Naive thymus-derived CD4-positive, alpha-beta T cell (primary cell): ENCODE measurements at regions of chr9 and their contacts with region 1.

Region 1: GRCh38 chr9:97411789-97412625 is at the start of gene TDRD7:
- DNase-seq: peak; percentile 82 to 96 (median 90)
- ATAC-seq: peak; percentile 96
- H3K4me3 ChIP-seq: peak within 1 kb of the TSS; percentile 49
- H3K4me3 Mint-ChIP-seq: peak within 1 kb of the TSS; percentile 73 to 95 (median 86)
- H3K27ac ChIP-seq: peak within 1 kb of the TSS; percentile 85
- H3K27ac Mint-ChIP-seq: peak within 1 kb of the TSS; percentile 61 to 93 (median 86)
- H3K4me1 ChIP-seq: peaks cover 8 to 13% of the 10 kb centered on the region in 2 donors
- H3K4me1 Mint-ChIP-seq: peaks cover 12 to 39% (median 34%) of the 10 kb centered on the region in 7 donors
- H3K27me3 ChIP-seq: no peaks in the 10 kb centered on the region
- H3K27me3 Mint-ChIP-seq: peaks cover 16 to 34% (median 16%) of the 10 kb centered on the region in 5 donors
- total RNA-seq, gene TDRD7: 7.8 to 15.0 (median 10.8) TPM

Region 2: GRCh38 chr9:96777426-96777864 is 634.6 kb before region 1 on chr9:
- CTCF ChIA-PET with region 1: no interaction called
- POLR2A ChIA-PET with region 1: no interaction called
- intact Hi-C with region 1: loop called (anchors 5 kb)
- DNase-seq: peak in 5 of 9 donors; percentile 18 to 47 (median 29)
- ATAC-seq: peak; percentile 28
- H3K4me3 ChIP-seq: peak overlapping the region; percentile 84
- H3K4me3 Mint-ChIP-seq: peak overlapping the region; percentile 91 to 100 (median 98)
- H3K27ac ChIP-seq: peak overlapping the region; percentile 92
- H3K27ac Mint-ChIP-seq: peak overlapping the region; percentile 94 to 100 (median 98)
- H3K4me1 ChIP-seq: peaks cover 6 to 12% of the 10 kb centered on the region in 2 donors
- H3K4me1 Mint-ChIP-seq: peaks cover 12 to 64% (median 58%) of the 10 kb centered on the region in 7 donors
- H3K27me3 ChIP-seq: no peaks in the 10 kb centered on the region
- H3K27me3 Mint-ChIP-seq: no peaks in the 10 kb centered on the region

Region 3: GRCh38 chr9:97398999-97399758 is 12.8 kb before region 1 on chr9:
- CTCF ChIA-PET with region 1: interaction called, 3 read pairs
- POLR2A ChIA-PET with region 1: no interaction called
- intact Hi-C with region 1: loop called in 1 of 2 experiments (anchors 1 kb)
- DNase-seq: peak; percentile 35 to 75 (median 51)
- ATAC-seq: peak; percentile 88
- H3K4me3 ChIP-seq: no peak overlapping the region
- H3K4me3 Mint-ChIP-seq: peak overlapping the region in 1 of 10 donors; percentile 49
- H3K27ac ChIP-seq: no peak overlapping the region
- H3K27ac Mint-ChIP-seq: peak overlapping the region in 1 of 9 donors; percentile 72
- H3K4me1 ChIP-seq: no peaks in the 10 kb centered on the region
- H3K4me1 Mint-ChIP-seq: peaks cover 0 to 27% (median 0%) of the 10 kb centered on the region in 7 donors
- H3K27me3 ChIP-seq: no peaks in the 10 kb centered on the region
- H3K27me3 Mint-ChIP-seq: peaks cover 5 to 44% (median 6%) of the 10 kb centered on the region in 5 donors

Region 4: GRCh38 chr9:97575673-97576200 is 163.7 kb after region 1 on chr9:
- CTCF ChIA-PET with region 1: no interaction called
- POLR2A ChIA-PET with region 1: interaction called, 4 read pairs
- intact Hi-C with region 1: loop called in 1 of 2 experiments (anchors 1 kb)
- DNase-seq: peak in 3 of 9 donors; percentile 4 to 13 (median 5)
- ATAC-seq: no peak
- H3K4me3 ChIP-seq: peak overlapping the region; percentile 69
- H3K4me3 Mint-ChIP-seq: peak overlapping the region; percentile 85 to 99 (median 92)
- H3K27ac ChIP-seq: no peak overlapping the region
- H3K27ac Mint-ChIP-seq: peak overlapping the region in 7 of 9 donors; percentile 32 to 94 (median 88)
- H3K4me1 ChIP-seq: peaks cover 0 to 6% of the 10 kb centered on the region in 2 donors
- H3K4me1 Mint-ChIP-seq: peaks cover 2 to 23% (median 15%) of the 10 kb centered on the region in 7 donors
- H3K27me3 ChIP-seq: no peaks in the 10 kb centered on the region
- H3K27me3 Mint-ChIP-seq: peaks cover 0 to 3% (median 0%) of the 10 kb centered on the region in 5 donors

Region 5: GRCh38 chr9:97615439-97616072 is 203.5 kb after region 1 on chr9:
- CTCF ChIA-PET with region 1: interaction called, 11 read pairs
- POLR2A ChIA-PET with region 1: no interaction called
- intact Hi-C with region 1: loop called (anchors 1 kb)
- DNase-seq: peak in 8 of 9 donors; percentile 29 to 61 (median 52)
- ATAC-seq: peak; percentile 76
- H3K4me3 ChIP-seq: no peak overlapping the region
- H3K4me3 Mint-ChIP-seq: no peak overlapping the region
- H3K27ac ChIP-seq: no peak overlapping the region
- H3K27ac Mint-ChIP-seq: peak overlapping the region in 1 of 9 donors; percentile 37
- H3K4me1 ChIP-seq: no peaks in the 10 kb centered on the region
- H3K4me1 Mint-ChIP-seq: peaks cover 0 to 15% (median 0%) of the 10 kb centered on the region in 7 donors
- H3K27me3 ChIP-seq: no peaks in the 10 kb centered on the region
- H3K27me3 Mint-ChIP-seq: no peaks in the 10 kb centered on the region